ENCODE measurements at regions of chr1 and their contacts with region 1.

Region 1: GRCh38 chr1:92108631-92109030 is 28.5 kb downstream of the BTBD8 start:
- DNase-seq: no peak
- ATAC-seq: no peak
- H3K4me3 ChIP-seq: no peak overlapping the region
- H3K4me3 Mint-ChIP-seq: no peak overlapping the region
- H3K27ac ChIP-seq: no peak overlapping the region
- H3K27ac Mint-ChIP-seq: no peak overlapping the region
- H3K4me1 ChIP-seq: no peaks in the 10 kb centered on the region
- H3K4me1 Mint-ChIP-seq: no peaks in the 10 kb centered on the region
- H3K27me3 ChIP-seq: no peaks in the 10 kb centered on the region
- H3K27me3 Mint-ChIP-seq: no peaks in the 10 kb centered on the region
- CTCF ChIP-seq: no peak

Region 2: GRCh38 chr1:91819038-91819788 is 289.4 kb before region 1 on chr1:
- CTCF ChIA-PET with region 1: no interaction called
- POLR2A ChIA-PET with region 1: no interaction called
- intact Hi-C with region 1: no loop called
- DNase-seq: no peak
- ATAC-seq: no peak
- H3K4me3 ChIP-seq: no peak overlapping the region
- H3K4me3 Mint-ChIP-seq: no peak overlapping the region
- H3K27ac ChIP-seq: peak overlapping the region in 1 of 2 experiments; percentile 31
- H3K27ac Mint-ChIP-seq: no peak overlapping the region
- H3K4me1 ChIP-seq: peaks cover 6% of the 10 kb centered on the region
- H3K4me1 Mint-ChIP-seq: peaks cover 37% of the 10 kb centered on the region
- H3K27me3 ChIP-seq: no peaks in the 10 kb centered on the region
- H3K27me3 Mint-ChIP-seq: no peaks in the 10 kb centered on the region
- CTCF ChIP-seq: no peak

Region 3: GRCh38 chr1:92051948-92052347 is 56.7 kb before region 1 on chr1:
- CTCF ChIA-PET with region 1: no interaction called
- POLR2A ChIA-PET with region 1: no interaction called
- intact Hi-C with region 1: loop called in 1 of 2 experiments (anchors 5 kb)
- DNase-seq: no peak
- ATAC-seq: no peak
- H3K4me3 ChIP-seq: no peak overlapping the region
- H3K4me3 Mint-ChIP-seq: no peak overlapping the region
- H3K27ac ChIP-seq: no peak overlapping the region
- H3K27ac Mint-ChIP-seq: no peak overlapping the region
- H3K4me1 ChIP-seq: no peaks in the 10 kb centered on the region
- H3K4me1 Mint-ChIP-seq: no peaks in the 10 kb centered on the region
- H3K27me3 ChIP-seq: no peaks in the 10 kb centered on the region
- H3K27me3 Mint-ChIP-seq: no peaks in the 10 kb centered on the region
- CTCF ChIP-seq: no peak